K562 (cell line): ENCODE measurements at regions of chr16 and their contacts with region 1.

Region 1: GRCh38 chr16:11263737-11264136 is 5.4 kb downstream of the TNP2 start:
- DNase-seq: no peak
- ATAC-seq: no peak
- H3K4me3 ChIP-seq: no peak overlapping the region
- H3K27ac ChIP-seq: no peak overlapping the region
- H3K4me1 ChIP-seq: peaks cover 0 to 3% of the 10 kb centered on the region in 2 experiments; a peak in 1 of 5 replicates
- H3K27me3 ChIP-seq: peaks cover 2 to 40% of the 10 kb centered on the region in 2 experiments; a peak in 4 of 5 replicates
- CTCF ChIP-seq: no peak
- EP300 ChIP-seq: no peak
- POLR2A ChIP-seq: no peak
- RAD21 ChIP-seq: no peak

Region 2: DNA sequence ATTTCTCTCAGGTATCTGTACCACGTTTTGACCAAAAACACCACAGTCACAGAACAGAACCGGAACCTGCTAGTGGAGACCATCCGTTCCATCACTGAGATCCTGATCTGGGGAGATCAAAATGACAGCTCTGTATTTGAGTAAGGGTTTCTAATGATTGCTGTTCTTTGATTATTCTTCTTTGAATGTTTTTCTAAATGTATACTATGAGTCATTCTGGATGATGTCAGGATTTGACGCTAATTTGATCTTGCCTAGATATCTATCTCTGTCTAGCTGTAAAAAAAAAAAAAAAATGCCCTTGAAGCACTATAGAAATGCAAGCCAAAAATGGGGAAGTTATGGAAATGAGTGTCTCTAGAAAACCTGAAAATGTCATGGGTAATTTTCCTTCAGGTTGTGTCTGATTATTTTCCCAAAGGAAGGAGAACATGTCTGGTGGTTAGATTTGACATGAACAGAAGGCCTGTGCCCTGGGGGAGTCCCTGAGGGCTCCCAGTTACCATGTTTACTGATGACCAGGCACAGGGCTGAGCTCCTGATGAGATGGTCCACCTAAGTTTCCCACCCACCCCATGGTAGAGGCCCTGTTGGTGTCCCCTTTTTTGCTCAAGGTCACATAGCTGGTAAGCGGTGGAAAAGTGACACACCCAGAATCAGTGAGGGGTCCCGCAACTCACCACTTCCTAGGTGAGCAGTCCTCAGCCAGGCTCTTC is 305.8 kb before region 1 on chr16:
- CTCF ChIA-PET with region 1: no interaction called
- POLR2A ChIA-PET with region 1: no interaction called
- in situ Hi-C with region 1: loop called (anchors 5 kb)
- intact Hi-C with region 1: no loop called
- DNase-seq: no peak
- ATAC-seq: no peak
- H3K4me3 ChIP-seq: no peak overlapping the region
- H3K27ac ChIP-seq: no peak overlapping the region; the same call in 2 of the 3 replicates
- H3K4me1 ChIP-seq: peaks cover 0 to 6% of the 10 kb centered on the region in 2 experiments; a peak in 1 of 5 replicates
- H3K27me3 ChIP-seq: no peaks in the 10 kb centered on the region
- CTCF ChIP-seq: no peak
- EP300 ChIP-seq: no peak
- POLR2A ChIP-seq: no peak
- RAD21 ChIP-seq: no peak

Region 3: GRCh38 chr16:11308493-11309283 is 45.0 kb after region 1 on chr16:
- CTCF ChIA-PET with region 1: no interaction called
- POLR2A ChIA-PET with region 1: no interaction called
- in situ Hi-C with region 1: no loop called
- intact Hi-C with region 1: no loop called
- DNase-seq: peak in 2 of 4 experiments; percentile 41 to 46
- ATAC-seq: no peak
- H3K4me3 ChIP-seq: no peak overlapping the region
- H3K27ac ChIP-seq: no peak overlapping the region
- H3K4me1 ChIP-seq: peaks cover 11 to 25% of the 10 kb centered on the region in 2 experiments; a peak in 3 of 5 replicates
- H3K27me3 ChIP-seq: peaks cover 0 to 6% of the 10 kb centered on the region in 2 experiments; a peak in 2 of 5 replicates
- CTCF ChIP-seq: no peak
- EP300 ChIP-seq: no peak
- POLR2A ChIP-seq: no peak
- RAD21 ChIP-seq: no peak

Region 4: GRCh38 chr16:11356573-11357331 is 93.0 kb after region 1 on chr16:
- CTCF ChIA-PET with region 1: no interaction called
- POLR2A ChIA-PET with region 1: interaction called, 3 read pairs
- in situ Hi-C with region 1: loop called (anchors 5 kb)
- intact Hi-C with region 1: no loop called
- DNase-seq: peak; percentile 75 to 82 (median 78)
- ATAC-seq: peak; percentile 90
- H3K4me3 ChIP-seq: no peak overlapping the region
- H3K27ac ChIP-seq: no peak overlapping the region; the same call in 2 of the 3 replicates
- H3K4me1 ChIP-seq: peaks cover 8 to 39% of the 10 kb centered on the region in 2 experiments; a peak in 4 of 5 replicates
- H3K27me3 ChIP-seq: no peaks in the 10 kb centered on the region
- CTCF ChIP-seq: peak; percentile 77 to 88 (median 84)
- EP300 ChIP-seq: no peak
- POLR2A ChIP-seq: no peak
- RAD21 ChIP-seq: peak; percentile 77 to 84